Activated CD4-positive, alpha-beta T cell treated with anti-CD3 and anti-CD28 coated beads, Interleukin-2, amount 10 ng/mL, durations not matched to agents 24 days and 14 days (primary cell): ENCODE measurements at regions of chr1 and their contacts with region 1.

Region 1: DNA sequence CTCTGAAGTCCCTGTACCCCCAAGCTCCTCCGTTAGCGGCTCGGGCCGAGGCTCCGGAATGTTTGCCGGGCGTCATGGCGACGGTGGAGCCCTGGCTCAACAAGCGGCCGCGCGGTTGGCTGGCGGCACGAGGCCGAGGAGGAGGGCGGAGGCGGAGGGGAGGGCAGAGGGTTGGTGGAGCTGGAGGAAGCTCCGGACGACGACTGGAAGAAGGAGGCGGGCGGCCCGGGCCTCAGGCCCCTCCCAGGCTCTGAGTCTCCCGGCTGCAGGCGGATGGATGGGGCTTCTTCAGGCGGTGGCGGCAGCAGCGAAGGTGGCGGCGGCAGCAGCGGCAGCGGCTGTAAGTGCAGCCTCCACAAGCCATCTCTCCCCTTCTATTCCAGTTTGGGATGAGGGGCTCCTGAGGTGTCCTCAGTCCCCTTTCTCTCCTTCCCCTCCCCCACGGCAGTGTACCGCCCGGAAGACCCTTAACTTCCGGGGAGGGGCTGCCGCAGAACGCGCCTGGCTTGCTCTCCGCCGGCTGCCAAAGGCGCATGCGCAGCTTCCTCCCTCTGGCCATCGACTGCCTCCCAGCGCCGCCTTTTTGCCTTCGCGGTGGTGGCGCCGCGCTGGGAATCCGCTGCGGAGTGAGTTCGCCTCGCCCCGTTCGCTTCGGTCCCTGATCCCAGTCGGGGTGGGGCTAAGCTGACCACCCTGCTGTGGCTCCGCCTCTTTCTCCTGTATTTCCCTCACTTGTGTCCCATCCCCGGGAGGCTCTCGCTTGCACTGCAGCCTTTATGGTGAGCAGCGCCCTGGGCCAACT is at the starts of genes DNAI4 and MIER1:
- DNase-seq: peak; percentile 99
- H3K4me3 Mint-ChIP-seq: peak within 1 kb of the TSS; percentile 99
- H3K27ac Mint-ChIP-seq: peak within 1 kb of the TSS; percentile 97
- H3K4me1 Mint-ChIP-seq: peaks cover 41% of the 10 kb centered on the region
- H3K27me3 Mint-ChIP-seq: no peaks in the 10 kb centered on the region
- total RNA-seq, gene DNAI4: 0.26 and 2.7 TPM in 2 replicates
- total RNA-seq, gene MIER1: 51.8 and 54.9 TPM in 2 replicates

Region 2: GRCh38 chr1:66788231-66788939 is 136.6 kb before region 1 on chr1:
- intact Hi-C with region 1: loop called (anchors 5 kb)
- DNase-seq: peak; percentile 76
- H3K4me3 Mint-ChIP-seq: peak overlapping the region; percentile 60
- H3K27ac Mint-ChIP-seq: peak overlapping the region; percentile 63
- H3K4me1 Mint-ChIP-seq: peaks cover 17% of the 10 kb centered on the region
- H3K27me3 Mint-ChIP-seq: no peaks in the 10 kb centered on the region

Region 3: DNA sequence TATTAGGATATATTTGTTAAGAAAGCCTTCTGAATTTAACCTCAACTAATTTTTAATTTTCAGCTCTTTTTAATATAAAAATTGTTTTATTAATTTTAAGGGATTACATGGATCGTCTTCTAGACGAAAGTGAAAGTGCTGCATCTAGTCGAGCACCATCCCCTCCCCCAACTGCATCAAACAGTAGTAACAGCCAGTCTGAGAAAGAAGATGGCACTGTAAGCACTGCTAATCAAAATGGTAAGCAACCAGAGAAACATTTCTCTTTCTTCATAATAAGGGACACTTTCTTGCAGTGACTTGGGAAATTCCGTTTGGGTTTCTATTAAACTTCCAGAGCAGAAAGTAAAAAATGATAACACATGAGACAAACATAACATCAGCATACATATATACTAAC is 56.7 kb after region 1 on chr1:
- intact Hi-C with region 1: loop called (anchors 2 kb)
- DNase-seq: peak; percentile 88
- H3K4me3 Mint-ChIP-seq: peak overlapping the region; percentile 79
- H3K27ac Mint-ChIP-seq: peak overlapping the region; percentile 35
- H3K4me1 Mint-ChIP-seq: peaks cover 27% of the 10 kb centered on the region
- H3K27me3 Mint-ChIP-seq: no peaks in the 10 kb centered on the region

Region 4: GRCh38 chr1:67053785-67054772 is 129.1 kb after region 1 on chr1 and contains the start of gene SLC35D1:
- intact Hi-C with region 1: loop called (anchors 2 kb)
- DNase-seq: peak; percentile 94
- H3K4me3 Mint-ChIP-seq: peak within 1 kb of the TSS; percentile 86
- H3K27ac Mint-ChIP-seq: peak within 1 kb of the TSS; percentile 95
- H3K4me1 Mint-ChIP-seq: peaks cover 28% of the 10 kb centered on the region
- H3K27me3 Mint-ChIP-seq: peaks cover 10% of the 10 kb centered on the region
- total RNA-seq, gene SLC35D1: 15.9 and 16.1 TPM in 2 replicates

Region 5: DNA sequence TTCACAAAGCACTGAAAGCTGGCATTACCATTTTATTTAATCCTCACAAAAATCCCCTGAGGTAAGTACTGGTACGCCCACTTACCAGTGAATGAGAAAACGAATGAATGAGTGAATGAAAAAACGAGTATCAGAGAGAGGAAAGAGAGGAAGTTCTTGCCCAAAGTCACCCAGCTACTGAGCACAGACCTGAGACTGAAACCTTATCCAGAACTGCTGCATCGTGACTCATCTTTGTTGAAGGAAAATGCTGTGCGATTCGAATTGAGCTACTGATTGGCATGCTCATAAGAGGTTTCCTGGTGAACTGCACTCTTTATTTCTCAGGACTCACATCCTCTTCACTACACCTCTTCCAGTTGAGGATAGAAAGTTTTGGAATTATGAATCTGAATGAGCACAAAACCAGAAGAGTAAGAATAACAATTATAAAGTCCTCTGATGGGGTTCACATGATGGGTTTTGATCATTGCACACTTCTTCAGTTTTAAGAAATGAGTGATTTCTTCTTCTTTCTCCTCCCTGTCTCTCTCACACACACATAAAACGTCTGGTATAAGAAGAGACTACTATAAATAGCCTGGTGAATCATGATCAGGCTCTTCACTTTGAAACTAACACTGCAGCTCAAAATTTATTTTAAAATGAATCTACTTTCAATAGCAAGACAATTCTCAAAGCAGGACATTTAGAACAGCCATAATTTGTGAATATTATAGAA is 414.8 kb after region 1 on chr1:
- intact Hi-C with region 1: loop called (anchors 5 kb)
- DNase-seq: peak; percentile 85
- H3K4me3 Mint-ChIP-seq: peak overlapping the region; percentile 68
- H3K27ac Mint-ChIP-seq: peak overlapping the region; percentile 94
- H3K4me1 Mint-ChIP-seq: peaks cover 77% of the 10 kb centered on the region
- H3K27me3 Mint-ChIP-seq: no peaks in the 10 kb centered on the region